ENCODE measurements at regions of chr11 and their contacts with region 1.

Region 1: DNA sequence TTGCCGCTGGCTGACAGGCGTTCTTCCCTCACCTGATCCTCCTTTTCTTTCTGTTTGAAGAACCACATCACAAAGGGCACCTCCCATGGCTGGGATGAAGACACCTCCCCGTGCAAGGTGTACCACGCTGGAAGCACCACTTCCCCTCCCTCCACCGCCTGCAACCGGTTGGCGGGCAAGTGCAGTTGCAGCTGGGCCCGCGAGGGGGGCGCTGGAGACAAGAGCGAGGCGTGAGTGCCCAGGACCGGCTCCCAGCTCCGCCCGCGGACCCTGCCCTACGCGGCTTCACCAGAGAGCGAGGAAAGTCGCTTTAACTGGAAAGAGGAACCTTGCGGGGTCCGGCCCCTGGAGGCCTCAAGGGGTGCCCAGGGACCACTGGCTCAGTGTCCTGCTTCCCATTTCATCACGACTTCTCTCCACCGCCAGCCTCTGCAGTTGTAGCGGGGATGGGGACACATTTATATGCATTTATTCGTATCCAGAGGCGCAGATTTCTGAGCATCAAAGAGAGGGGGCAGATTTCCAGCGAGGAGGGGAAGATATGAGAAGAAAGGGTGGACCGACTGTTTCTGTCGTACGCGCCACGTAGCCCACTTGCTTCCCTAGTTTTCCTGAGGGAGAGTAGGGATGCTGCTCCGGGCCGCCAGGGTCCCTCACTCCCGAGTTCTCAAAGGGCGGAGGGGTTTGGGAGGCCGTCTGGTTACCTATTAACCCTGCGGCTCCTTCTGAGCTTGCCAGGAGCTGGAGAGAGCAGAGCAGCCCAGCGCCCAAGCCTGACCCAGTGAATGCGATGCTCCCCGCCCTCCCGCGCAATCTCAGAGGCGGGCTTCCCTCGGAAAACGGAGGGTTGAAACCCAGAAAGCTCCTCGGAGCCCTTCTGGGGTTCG is 3.5 kb downstream of the ESAM start:
- DNase-seq: peak; percentile 81
- H3K4me3 ChIP-seq: peak overlapping the region; percentile 23 to 65 (median 36)
- H3K27ac ChIP-seq: peak overlapping the region; percentile 97
- H3K4me1 ChIP-seq: peaks cover 65% of the 10 kb centered on the region
- H3K27me3 ChIP-seq: no peaks in the 10 kb centered on the region
- CTCF ChIP-seq: peak; percentile 73 to 91
- POLR2A ChIP-seq: peak; percentile 42

Region 2: DNA sequence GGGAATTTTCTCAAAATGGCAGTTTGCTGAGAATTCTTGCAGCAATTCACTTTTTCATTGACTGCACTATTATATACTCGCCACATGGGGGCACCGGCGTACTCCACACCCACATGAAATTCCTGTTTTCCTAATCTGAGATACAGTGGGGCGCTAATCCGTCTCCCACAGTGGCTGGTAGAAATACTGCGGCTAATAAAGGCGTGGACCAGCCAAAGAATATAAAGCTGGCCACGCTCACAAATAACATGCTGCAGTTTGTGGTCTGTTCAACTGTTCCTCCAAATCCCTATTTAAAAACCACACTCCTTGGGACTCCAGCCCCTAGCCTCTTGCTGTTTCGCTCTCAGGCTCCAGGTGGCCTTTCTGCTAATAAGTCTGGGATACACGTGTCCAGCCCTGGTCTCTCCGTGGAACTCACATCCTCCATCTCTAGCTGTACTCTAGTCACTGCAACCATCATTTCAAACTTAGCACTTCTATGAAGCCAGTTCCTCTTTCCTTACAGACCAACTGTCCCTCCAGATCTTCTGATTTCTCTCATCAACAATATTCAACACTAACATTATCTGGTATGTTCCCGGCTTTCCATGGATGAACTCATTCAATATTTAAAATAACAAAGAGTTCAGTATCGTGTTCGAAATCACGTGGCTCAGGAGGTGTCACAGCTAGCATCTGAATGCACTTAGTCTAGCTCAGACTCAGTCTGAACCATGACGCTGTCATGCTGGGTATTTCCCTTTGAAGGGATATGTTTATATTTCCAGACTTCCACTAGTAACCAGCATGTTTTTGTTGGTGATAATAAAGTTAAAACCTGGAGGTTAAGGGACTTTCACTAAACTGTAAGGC is 113.9 kb before region 1 on chr11:
- CTCF ChIA-PET with region 1: interaction called, 21 read pairs
- POLR2A ChIA-PET with region 1: no interaction called
- dilution Hi-C with region 1: no loop called
- intact Hi-C with region 1: loop called (anchors 1 kb)
- DNase-seq: peak; percentile 87
- H3K4me3 ChIP-seq: peak overlapping the region in 1 of 3 experiments; percentile 32
- H3K27ac ChIP-seq: peak overlapping the region; percentile 22
- H3K4me1 ChIP-seq: peaks cover 18% of the 10 kb centered on the region
- H3K27me3 ChIP-seq: no peaks in the 10 kb centered on the region
- CTCF ChIP-seq: peak; percentile 56 to 79
- POLR2A ChIP-seq: no peak

Region 3: DNA sequence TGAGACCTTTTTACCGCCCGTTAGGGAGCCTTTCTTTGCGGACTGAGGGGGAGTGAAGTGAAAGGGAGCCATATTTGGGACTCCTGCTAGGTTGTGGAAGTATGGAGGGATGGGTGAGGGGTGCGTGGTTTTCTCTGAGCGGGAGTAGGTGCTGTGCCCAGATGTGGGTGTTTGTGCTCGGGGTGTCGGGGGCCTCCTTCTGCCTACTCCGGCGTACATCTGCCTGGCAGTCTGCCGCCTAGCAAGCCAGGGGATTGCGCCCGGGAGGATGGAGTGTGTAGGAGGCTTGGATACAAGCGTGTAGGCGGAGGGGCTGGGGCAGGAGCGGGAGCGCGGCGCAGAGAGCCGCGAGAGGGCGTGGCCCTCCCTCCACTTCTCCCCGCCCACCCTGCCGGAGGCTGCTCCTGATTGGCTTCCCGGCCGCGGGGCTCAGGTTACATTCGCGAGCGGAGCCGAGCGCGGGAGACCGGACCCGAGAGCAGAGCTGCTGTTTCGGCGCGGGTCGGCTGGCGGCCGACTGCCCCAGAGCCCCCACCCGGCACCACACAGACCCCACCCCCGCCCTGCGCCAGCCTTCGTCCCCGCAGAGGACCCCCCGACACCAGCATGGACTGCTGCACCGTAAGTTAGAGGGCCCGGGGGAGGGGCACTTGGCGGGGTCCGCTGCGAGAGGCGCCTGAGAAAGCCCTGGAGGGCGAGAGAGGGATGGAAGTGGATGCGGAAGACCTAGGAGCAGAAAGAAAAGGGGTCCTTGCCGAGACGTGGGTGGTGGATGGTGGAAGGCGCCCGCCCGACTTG is 18.9 kb before region 1 on chr11 and contains the start of gene NRGN:
- CTCF ChIA-PET with region 1: interaction called, 301 read pairs
- POLR2A ChIA-PET with region 1: interaction called, 6 read pairs
- dilution Hi-C with region 1: no loop called
- intact Hi-C with region 1: no loop called
- DNase-seq: peak; percentile 92
- H3K4me3 ChIP-seq: peak within 1 kb of the TSS; percentile 63 to 80 (median 69)
- H3K27ac ChIP-seq: no peak within 1 kb of the TSS
- H3K4me1 ChIP-seq: peaks cover 13% of the 10 kb centered on the region
- H3K27me3 ChIP-seq: peaks cover 3 to 5% of the 10 kb centered on the region in 2 experiments
- CTCF ChIP-seq: no peak
- POLR2A ChIP-seq: peak; percentile 53
- total RNA-seq, gene NRGN: 30.9 and 33.5 TPM in 2 replicates

Region 4: DNA sequence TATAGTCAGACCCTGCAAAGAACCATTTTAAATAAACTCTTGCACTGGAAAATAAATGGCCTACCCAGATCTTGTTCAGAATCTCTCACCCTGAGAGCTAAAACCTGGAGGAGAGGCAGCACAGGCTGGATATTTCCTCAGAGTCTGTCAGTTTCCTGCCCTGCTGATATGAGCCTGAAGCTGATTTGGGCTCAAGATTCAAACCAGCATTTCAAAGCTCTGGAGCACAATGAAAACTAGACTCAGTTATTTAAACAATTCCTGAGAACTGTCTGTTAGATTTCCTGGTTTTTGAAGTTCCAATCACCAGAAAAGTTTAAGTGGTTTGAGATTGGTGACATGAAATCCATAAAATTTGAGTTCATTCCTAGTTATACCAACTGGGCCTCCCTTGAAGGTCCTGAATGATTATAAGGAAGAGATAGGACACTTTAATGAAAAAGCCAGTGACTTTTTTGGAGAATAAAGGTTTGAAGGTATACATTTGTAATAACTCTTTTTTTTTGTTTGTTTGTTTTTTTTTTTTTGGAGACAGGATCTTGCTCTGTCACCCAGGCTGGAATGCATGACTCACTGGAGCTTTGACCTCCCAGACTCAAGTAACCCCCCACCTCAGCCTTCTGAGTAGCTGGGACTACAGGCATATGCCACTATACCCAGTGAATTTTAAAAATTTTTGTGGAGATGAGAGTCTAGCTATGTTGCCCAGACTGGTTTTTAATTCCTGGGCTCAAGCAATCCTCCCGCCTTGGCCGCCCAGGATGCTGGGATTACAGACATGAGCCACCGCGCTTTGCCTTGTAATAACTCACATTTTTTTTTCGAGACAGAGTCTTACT is 11.5 kb after region 1 on chr11:
- CTCF ChIA-PET with region 1: interaction called, 301 read pairs
- POLR2A ChIA-PET with region 1: interaction called, 10 read pairs
- dilution Hi-C with region 1: no loop called
- intact Hi-C with region 1: loop called (anchors 1 kb)
- DNase-seq: peak; percentile 72
- H3K4me3 ChIP-seq: no peak overlapping the region
- H3K27ac ChIP-seq: peak overlapping the region; percentile 86
- H3K4me1 ChIP-seq: peaks cover 34% of the 10 kb centered on the region
- H3K27me3 ChIP-seq: no peaks in the 10 kb centered on the region
- CTCF ChIP-seq: no peak
- POLR2A ChIP-seq: peak; percentile 41

Region 5: DNA sequence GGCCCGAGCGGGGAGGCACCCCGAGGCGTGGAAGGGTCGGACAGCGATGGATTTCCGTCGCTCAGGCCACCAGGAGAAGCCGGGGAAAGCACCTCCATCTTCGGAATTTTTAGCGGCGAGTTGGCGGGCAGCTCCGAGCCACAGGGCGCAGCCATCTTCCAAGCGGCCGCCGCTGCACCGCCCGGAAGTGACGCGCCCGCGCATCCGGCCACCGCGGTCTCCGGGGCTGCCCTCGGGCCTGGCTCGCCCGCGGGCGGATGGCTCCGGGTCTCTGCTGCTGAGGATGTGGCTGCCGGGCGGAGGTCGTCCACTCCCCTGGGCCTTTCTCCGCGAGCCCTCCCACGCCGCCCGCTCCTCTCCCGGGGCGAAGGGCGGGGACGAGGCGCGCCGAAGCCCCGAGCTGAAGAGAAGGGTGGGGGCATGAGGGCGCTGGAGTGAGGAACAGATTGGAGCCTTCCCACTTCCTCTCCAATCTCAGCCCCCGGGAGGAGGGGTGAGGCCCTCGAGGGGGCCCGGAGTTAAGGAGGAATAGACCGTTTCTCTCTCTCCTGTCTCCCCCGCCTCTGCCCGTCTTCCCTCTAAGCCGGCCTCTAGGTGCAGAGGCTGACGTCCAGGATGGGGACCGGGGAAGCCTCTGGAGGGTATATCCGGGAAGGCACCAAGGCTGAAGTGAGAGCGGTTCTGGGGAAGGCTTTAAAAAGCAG is 41.8 kb after region 1 on chr11 and contains the start of gene MSANTD2:
- CTCF ChIA-PET with region 1: interaction called, 88 read pairs
- POLR2A ChIA-PET with region 1: interaction called, 4 read pairs
- dilution Hi-C with region 1: no loop called
- intact Hi-C with region 1: loop called (anchors 1 kb)
- DNase-seq: peak; percentile 82
- H3K4me3 ChIP-seq: peak within 1 kb of the TSS; percentile 59 to 98 (median 62)
- H3K27ac ChIP-seq: peak within 1 kb of the TSS; percentile 81
- H3K4me1 ChIP-seq: peaks cover 20% of the 10 kb centered on the region
- H3K27me3 ChIP-seq: no peaks in the 10 kb centered on the region
- CTCF ChIP-seq: no peak
- POLR2A ChIP-seq: peak; percentile 81
- total RNA-seq, gene MSANTD2: 17.0 and 23.2 TPM in 2 replicates